ENCODE measurements at regions of chr11 and their contacts with region 1.

Region 1: DNA sequence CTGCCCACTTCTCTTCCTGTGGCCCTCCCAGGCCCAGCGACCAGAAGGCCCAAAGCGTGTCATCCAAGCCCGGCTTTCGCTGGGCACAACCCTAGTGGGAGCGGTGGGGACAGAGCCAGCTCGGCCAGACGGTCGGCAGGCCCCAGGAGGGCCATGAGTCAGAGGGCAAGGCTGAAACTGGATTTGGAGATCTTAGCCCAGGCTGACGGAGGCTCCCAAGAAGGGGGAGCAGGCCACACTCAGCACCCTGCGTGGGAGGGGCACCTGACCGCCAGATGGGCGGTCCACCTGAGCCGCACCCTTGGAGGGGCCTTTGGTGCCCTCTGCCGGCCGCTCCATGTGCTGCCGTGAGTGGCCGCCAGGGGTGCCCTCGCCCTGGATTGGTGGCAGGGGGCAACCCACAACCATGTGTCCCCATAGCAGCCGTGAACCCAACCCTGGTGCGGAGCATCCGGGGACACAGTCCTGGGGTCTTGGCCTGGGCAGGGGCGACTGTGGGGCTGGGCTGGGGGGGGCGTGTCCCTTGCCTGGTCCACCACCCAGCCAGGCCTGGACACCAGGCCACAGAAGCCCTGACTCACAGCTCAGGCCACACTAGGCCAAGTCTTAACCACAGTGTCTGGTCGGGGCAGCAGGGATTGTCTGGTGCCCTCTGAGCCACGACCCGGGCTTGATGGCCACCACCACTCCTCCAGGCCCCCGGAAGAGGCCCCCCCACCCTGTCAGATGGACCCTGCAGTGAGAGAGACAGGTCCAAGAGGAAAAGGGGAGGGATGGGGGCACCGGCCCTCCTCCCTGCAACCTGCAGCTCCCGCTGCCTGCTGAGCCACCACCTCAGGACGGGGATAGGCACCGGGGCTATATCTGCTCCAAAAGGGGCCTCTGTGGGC is 19.2 kb upstream of the TALDO1 start:
- DNase-seq: peak; percentile 92
- ATAC-seq: peak; percentile 80
- H3K4me3 Mint-ChIP-seq: no peak overlapping the region
- H3K27ac Mint-ChIP-seq: no peak overlapping the region
- H3K4me1 Mint-ChIP-seq: peaks cover 5% of the 10 kb centered on the region
- H3K27me3 Mint-ChIP-seq: peaks cover 10% of the 10 kb centered on the region

Region 2: GRCh38 chr11:662689-663274 is 65.3 kb before region 1 on chr11:
- CTCF ChIA-PET with region 1: interaction called, 7 read pairs
- POLR2A ChIA-PET with region 1: no interaction called
- intact Hi-C with region 1: loop called (anchors 1 to 5 kb)
- DNase-seq: peak; percentile 68
- ATAC-seq: peak; percentile 85
- H3K4me3 Mint-ChIP-seq: no peak overlapping the region
- H3K27ac Mint-ChIP-seq: no peak overlapping the region
- H3K4me1 Mint-ChIP-seq: no peaks in the 10 kb centered on the region
- H3K27me3 Mint-ChIP-seq: no peaks in the 10 kb centered on the region

Region 3: GRCh38 chr11:747158-748006 is 19.3 kb after region 1 on chr11 and contains the start of gene TALDO1:
- CTCF ChIA-PET with region 1: interaction called, 15 read pairs
- POLR2A ChIA-PET with region 1: no interaction called
- intact Hi-C with region 1: loop called in 1 of 2 experiments (anchors 1 kb)
- DNase-seq: peak; percentile 92
- ATAC-seq: peak; percentile 91
- H3K4me3 Mint-ChIP-seq: peak within 1 kb of the TSS; percentile 82
- H3K27ac Mint-ChIP-seq: peak within 1 kb of the TSS; percentile 72
- H3K4me1 Mint-ChIP-seq: peaks cover 20% of the 10 kb centered on the region
- H3K27me3 Mint-ChIP-seq: no peaks in the 10 kb centered on the region
- total RNA-seq, gene TALDO1: 239 to 246 TPM

Region 4: GRCh38 chr11:783581-784015 is 55.5 kb after region 1 on chr11:
- CTCF ChIA-PET with region 1: no interaction called
- POLR2A ChIA-PET with region 1: no interaction called
- intact Hi-C with region 1: no loop called
- DNase-seq: peak; percentile 75
- ATAC-seq: peak; percentile 85
- H3K4me3 Mint-ChIP-seq: no peak overlapping the region
- H3K27ac Mint-ChIP-seq: no peak overlapping the region
- H3K4me1 Mint-ChIP-seq: peaks cover 14% of the 10 kb centered on the region
- H3K27me3 Mint-ChIP-seq: no peaks in the 10 kb centered on the region

Region 5: GRCh38 chr11:819129-819931 is 91.2 kb after region 1 on chr11:
- CTCF ChIA-PET with region 1: no interaction called
- POLR2A ChIA-PET with region 1: no interaction called
- intact Hi-C with region 1: no loop called
- DNase-seq: peak; percentile 95
- ATAC-seq: peak; percentile 82
- H3K4me3 Mint-ChIP-seq: peak overlapping the region; percentile 72
- H3K27ac Mint-ChIP-seq: no peak overlapping the region
- H3K4me1 Mint-ChIP-seq: peaks cover 11% of the 10 kb centered on the region
- H3K27me3 Mint-ChIP-seq: no peaks in the 10 kb centered on the region